ENCODE measurements at regions of chr4 and their contacts with region 1.

Region 1: DNA sequence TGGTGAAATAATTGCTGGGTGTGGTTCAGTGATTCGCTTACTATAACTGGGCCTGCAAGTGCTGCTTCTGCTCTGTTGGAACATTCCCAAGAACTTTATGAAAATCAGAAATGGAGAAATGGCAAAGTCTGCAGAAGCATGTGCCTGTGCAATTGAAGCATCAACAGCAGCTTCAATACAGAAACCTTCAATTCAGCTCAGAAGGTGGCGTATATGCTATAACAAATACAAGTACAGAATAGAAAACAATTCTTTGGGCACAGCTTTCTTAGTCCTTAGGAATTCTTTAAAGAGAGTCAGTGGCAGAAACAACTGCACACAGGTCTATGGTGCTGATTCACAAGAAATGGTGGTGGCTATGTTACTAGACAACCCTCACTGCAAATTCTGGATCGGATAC is 18.0 kb upstream of the PDHA2 start:
- DNase-seq: no peak
- H3K4me3 ChIP-seq: no peak overlapping the region
- H3K27ac ChIP-seq: no peak overlapping the region
- H3K4me1 ChIP-seq: no peaks in the 10 kb centered on the region
- H3K27me3 ChIP-seq: no peaks in the 10 kb centered on the region

Region 2: DNA sequence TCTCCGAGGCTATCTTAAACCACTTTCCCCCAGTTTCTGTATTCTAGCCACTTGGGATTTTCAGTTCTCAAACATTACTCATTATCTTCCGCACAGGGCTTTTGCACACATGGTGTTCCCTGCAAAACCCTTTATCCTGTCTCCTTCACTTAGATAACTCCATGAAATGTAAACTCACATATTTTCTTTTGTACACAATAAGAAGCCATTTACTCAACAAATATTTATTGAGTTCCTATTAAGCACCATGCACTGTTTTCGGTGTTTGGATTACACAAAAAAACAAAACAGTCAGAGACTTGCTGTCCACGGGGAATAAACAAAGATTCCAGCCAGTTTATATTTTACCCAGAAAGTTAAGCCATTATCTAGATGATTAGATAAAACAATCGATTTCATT is 230.6 kb before region 1 on chr4:
- in situ Hi-C with region 1: no loop called
- DNase-seq: no peak
- H3K4me3 ChIP-seq: no peak overlapping the region
- H3K27ac ChIP-seq: no peak overlapping the region
- H3K4me1 ChIP-seq: no peaks in the 10 kb centered on the region
- H3K27me3 ChIP-seq: no peaks in the 10 kb centered on the region

Region 3: GRCh38 chr4:95701500-95702170 is 120.2 kb before region 1 on chr4:
- in situ Hi-C with region 1: loop called (anchors 25 kb)
- DNase-seq: no peak
- H3K4me3 ChIP-seq: no peak overlapping the region
- H3K27ac ChIP-seq: no peak overlapping the region
- H3K4me1 ChIP-seq: no peaks in the 10 kb centered on the region
- H3K27me3 ChIP-seq: no peaks in the 10 kb centered on the region

Region 4: DNA sequence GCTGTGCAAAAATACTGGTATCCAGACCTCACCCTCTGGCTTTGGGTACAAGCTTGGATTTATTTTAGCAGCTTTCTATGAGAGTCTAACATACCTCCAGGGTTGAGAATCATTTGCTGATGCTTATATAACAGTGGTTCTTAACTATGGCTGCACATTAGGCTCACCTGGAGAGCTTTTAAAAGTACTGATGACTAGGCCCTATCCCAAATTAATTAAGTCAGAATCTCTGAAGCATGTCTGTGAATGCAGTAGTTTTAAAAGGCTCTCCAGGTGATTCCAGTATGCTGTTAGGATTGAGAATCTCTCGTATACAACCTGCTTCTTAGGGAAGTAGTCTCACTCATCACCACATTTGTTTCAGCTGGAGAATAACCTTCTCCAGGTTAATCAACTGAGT is 117.3 kb after region 1 on chr4:
- in situ Hi-C with region 1: no loop called
- DNase-seq: no peak
- H3K4me3 ChIP-seq: no peak overlapping the region
- H3K27ac ChIP-seq: no peak overlapping the region
- H3K4me1 ChIP-seq: no peaks in the 10 kb centered on the region
- H3K27me3 ChIP-seq: no peaks in the 10 kb centered on the region

Region 5: DNA sequence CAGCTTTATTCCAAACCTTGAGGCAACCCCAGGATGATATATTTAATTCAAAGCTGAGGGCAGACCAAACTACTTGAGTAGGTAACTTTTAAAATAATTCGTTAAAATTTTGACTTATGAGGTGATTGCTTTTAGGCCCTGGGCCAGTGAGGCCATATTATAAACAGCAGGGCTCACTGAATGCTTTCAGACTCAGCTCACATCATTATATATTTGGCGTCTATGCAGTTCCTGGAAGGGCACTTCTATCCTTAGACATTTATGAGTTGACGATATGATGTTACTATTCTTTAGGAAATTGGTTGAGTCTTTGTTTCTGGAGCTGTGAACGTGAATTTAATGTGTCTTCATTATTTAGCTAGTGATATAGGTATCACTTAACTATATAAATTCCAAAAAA is 418.2 kb after region 1 on chr4:
- in situ Hi-C with region 1: no loop called
- DNase-seq: no peak
- H3K4me3 ChIP-seq: no peak overlapping the region
- H3K27ac ChIP-seq: no peak overlapping the region
- H3K4me1 ChIP-seq: no peaks in the 10 kb centered on the region
- H3K27me3 ChIP-seq: no peaks in the 10 kb centered on the region

Measured in GM23248 (cell line).